Left lung (tissue), 14 donors: ENCODE measurements at regions of chr6 and their contacts with region 1.

Region 1: DNA sequence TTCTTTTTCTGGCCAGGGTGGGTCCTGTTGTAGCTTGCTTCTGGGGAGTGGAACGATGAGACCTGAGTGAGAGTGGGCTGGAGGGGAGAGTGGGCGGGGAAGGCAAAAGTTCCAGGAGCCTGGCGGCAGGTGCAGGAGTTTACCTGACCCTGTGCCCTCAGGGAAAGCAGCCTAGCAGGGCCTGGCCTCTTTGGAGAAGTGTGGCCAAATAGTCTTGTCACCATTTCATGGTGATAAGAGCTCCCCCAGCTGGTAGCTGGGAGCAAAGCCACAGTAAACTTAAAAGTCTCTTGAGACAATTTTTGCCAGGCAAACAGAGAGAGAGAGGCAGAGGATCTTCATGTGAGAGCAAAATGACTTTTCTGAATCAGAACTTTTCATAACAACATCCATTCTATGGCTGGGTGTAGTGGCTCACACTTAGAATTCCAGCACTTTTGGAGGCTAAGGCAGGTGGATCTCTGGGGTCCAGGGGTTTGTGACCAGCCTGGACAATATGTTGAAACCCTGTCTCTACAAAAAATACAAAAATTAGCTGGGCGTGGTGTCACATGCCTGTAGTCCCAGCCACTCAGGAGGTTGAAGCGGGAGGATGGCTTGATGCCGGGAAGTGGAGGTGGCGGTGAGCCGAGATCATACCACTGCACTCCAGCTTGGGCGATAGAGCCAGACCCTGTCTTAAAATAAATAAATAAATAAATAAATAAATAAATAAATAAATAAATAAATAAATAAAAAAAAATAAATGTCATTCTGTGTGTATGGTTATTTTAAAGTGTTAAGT is 161.8 kb upstream of the SCGN start:
- DNase-seq: peak in 3 of 4 donors; percentile 70 to 91 (median 74)
- ATAC-seq: peak; percentile 100
- H3K4me3 ChIP-seq: no peak overlapping the region
- H3K27ac ChIP-seq: no peak overlapping the region
- H3K4me1 ChIP-seq: peaks cover 3 to 4% of the 10 kb centered on the region in 2 donors
- H3K27me3 ChIP-seq: no peaks in the 10 kb centered on the region
- CTCF ChIP-seq: peak; percentile 65 to 67

Region 2: DNA sequence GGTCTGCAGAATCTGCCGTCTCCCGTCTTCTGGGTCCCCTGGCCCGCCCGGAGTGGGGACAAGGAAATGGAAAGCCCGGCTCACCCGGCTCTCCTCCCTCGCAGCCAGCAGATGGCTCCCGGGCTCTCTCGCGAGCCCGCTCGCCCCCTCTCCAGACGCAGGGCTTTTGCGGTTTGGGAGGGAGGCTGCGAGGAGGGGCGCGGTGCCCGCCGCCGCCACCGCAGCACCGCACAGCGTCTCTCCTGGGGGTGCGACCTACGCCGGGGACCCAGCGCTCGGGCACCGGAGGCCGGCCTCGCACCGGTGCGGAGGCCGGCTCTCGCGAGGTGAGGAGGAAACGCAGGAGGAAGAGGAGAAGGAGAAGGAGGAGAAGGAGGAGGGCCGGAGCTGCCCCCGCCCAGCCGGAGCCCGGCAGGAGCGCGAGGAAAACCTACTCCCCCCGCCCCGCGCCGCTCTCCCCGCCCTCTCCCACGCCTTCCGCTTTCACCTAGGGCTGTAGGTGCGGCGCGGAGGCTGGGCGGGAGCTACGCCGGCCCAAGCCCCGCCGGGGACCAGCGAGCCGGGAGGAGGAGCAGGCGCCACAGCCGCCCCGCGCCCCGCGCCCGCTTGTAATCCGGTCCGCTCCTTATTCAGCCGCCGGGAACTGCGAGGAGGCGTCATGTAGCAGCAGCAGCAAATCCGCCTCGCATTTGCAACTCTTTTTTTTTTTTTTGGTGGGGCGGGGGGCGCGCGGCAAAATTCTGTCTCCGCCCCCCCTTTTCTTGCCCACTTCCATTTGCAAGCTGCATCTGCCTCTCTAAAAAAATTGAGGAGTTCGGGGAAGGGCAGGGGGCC is 211.1 kb before region 1 on chr6 and contains the start of gene CARMIL1:
- intact Hi-C with region 1: loop called in 1 of 2 experiments (anchors 5 kb)
- DNase-seq: peak; percentile 81 to 95 (median 90)
- ATAC-seq: peak; percentile 96
- H3K4me3 ChIP-seq: peak within 1 kb of the TSS; percentile 68 to 77
- H3K27ac ChIP-seq: peak within 1 kb of the TSS; percentile 63 to 78
- H3K4me1 ChIP-seq: peaks cover 4 to 25% of the 10 kb centered on the region in 2 donors
- H3K27me3 ChIP-seq: peaks cover 0 to 31% of the 10 kb centered on the region in 2 donors
- CTCF ChIP-seq: peak; percentile 59 to 61
- polyA plus RNA-seq, gene CARMIL1: 25.2 to 32.8 (median 29.3) TPM